ENCODE measurements at regions of chr6 and their contacts with region 1.

Region 1: GRCh38 chr6:3251462-3252314 is 7.1 kb upstream of the PSMG4 start:
- DNase-seq: peak; percentile 74 to 91 (median 84)
- H3K4me3 ChIP-seq: peak overlapping the region in 35 of 59 donors; percentile 0 to 57 (median 23)
- H3K27ac ChIP-seq: peak overlapping the region in 33 of 59 donors; percentile 4 to 77 (median 36)
- H3K27me3 ChIP-seq: no peaks in the 10 kb centered on the region
- CTCF ChIP-seq: peak; percentile 91 to 99 (median 98)

Region 2: DNA sequence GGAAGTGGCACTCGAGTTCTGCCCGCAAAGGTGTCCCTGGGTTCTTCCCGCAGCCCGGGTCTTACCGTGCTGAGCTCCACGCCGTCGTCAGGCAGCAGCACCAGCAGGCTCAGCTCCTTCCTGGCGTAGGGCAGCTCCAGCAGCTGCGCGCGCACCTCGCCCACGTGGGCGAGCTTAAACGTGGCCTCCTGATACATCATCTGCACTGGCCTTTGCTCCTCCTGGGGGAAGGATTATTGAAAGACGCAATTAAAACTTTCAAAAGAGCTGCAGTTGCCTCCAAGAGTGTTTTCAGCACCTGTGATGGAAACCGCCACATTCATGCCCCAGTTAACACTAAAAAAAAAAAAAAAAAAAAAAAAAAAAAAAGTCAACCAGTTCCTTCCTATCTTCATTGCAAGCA is 359.9 kb before region 1 on chr6:
- intact Hi-C with region 1: no loop called
- DNase-seq: peak in 1 of 10 donors; percentile 42
- H3K4me3 ChIP-seq: peak overlapping the region in 1 of 59 donors; percentile 14
- H3K27ac ChIP-seq: peak overlapping the region in 1 of 59 donors; percentile 17
- H3K27me3 ChIP-seq: no peaks in the 10 kb centered on the region
- CTCF ChIP-seq: no peak

Region 3: GRCh38 chr6:3068329-3069214 is 183.1 kb before region 1 on chr6 and contains the start of gene RIPK1:
- intact Hi-C with region 1: loop called (anchors 5 kb)
- DNase-seq: peak; percentile 85 to 96 (median 92)
- H3K4me3 ChIP-seq: peak within 1 kb of the TSS; percentile 68 to 98 (median 89)
- H3K27ac ChIP-seq: peak within 1 kb of the TSS; percentile 94 to 100 (median 99)
- H3K27me3 ChIP-seq: no peaks in the 10 kb centered on the region
- CTCF ChIP-seq: peak in 55 of 56 donors; percentile 34 to 80 (median 64)
- total RNA-seq, gene RIPK1: 6.5 to 17.9 (median 11.1) TPM

Region 4: DNA sequence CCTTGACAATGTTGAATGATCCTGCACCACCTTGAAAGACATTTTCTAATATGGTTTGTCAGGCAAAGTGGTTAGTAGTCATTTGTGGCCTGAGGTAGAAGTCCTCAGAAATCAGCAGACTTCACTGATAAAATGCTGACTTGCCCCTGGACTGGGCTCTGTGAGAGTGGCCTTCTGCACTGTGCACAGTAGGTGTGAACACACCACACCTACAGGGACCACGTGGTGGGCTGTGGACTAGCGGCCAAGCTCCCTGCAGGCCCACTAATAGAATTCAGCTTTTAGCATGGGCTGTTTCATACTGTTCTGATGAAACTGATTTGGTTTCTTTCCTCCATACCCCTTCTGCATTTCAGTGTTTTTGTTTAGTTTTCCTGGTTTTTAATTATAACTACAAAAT is 125.9 kb before region 1 on chr6:
- intact Hi-C with region 1: loop called (anchors 1 to 5 kb)
- DNase-seq: no peak
- H3K4me3 ChIP-seq: peak overlapping the region in 1 of 59 donors; percentile 12
- H3K27ac ChIP-seq: peak overlapping the region in 2 of 59 donors; percentile 27 to 28
- H3K27me3 ChIP-seq: no peaks in the 10 kb centered on the region
- CTCF ChIP-seq: no peak

Region 5: DNA sequence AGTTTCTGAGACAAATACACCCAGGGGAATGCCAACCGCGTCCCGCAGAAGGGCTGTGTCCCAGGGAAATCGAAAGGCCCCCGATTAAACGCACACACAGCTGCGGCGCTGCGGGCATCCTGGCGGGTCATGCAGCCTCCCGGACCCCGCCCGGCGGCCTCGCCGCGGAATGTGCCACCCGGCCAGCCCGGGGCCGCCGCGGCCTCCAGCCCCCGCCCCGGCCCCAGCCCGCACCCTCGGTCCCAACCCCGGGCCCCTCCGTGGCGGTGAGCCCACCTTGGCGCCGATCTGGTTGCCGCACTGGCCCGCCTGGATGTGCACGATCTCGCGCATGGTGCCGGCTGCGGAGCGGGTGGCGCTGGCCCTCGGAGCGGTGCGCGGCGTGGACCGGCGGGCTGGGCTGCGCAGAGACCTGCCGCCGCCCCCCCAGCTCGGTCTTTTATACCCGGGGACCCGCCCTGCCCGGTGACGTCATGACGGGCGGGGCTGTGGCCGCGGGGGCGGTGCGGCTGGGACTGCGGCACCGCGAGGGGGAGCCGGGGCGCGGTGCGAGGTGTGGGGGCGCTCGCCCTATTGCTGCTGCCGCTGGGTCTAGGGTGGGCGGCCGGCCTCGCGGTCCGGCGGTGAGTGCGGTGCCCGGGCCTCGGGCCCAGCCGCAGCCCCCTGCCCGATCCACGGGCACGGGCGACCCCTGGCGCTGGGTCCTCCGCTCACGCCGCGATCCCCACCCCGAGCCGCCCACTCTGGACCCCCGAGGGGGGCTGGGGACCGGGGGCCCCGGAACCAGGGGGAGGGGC is 94.4 kb before region 1 on chr6 and contains the start of gene TUBB2A:
- intact Hi-C with region 1: loop called (anchors 2 to 5 kb)
- DNase-seq: peak; percentile 61 to 93 (median 83)
- H3K4me3 ChIP-seq: peak within 1 kb of the TSS; percentile 52 to 99 (median 84)
- H3K27ac ChIP-seq: peak within 1 kb of the TSS; percentile 52 to 99 (median 96)
- H3K27me3 ChIP-seq: no peaks in the 10 kb centered on the region
- CTCF ChIP-seq: peak in 54 of 56 donors; percentile 21 to 81 (median 60)
- total RNA-seq, gene TUBB2A: 207 to 859 (median 516) TPM

Region 6: DNA sequence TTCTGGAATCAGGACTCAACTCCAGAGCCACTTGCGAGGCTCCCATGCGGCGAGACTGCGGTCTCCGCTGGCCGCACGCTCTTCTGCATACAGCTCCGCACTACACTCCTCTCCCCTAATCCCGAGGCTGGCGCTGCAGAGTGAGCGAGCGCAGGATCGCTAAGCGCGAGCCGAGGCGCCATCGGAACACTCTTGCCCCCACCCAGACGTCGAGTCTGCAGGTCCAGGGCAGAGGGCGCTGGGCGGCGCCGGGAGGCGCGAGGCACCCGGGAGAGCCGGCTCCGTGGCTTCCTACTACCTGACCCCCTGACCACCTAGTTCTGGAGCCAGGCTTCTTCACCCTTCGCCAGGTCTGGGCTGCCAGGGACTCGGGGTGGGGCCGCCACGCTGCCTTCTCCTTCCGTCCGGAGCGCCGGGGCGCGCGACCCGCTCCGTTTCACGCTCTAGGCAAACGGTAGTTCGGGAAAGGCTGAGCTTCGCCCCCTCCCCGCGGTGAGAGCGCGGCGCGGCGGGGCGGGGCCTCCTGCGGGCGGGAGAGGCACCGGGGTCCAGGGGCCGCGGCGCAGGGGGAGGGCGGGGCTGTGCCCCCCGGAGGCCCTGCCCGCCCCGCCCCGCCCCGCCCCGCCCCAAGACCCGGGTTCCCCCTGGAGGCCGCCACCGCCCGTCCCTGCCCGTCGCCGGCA is 89.0 kb before region 1 on chr6:
- intact Hi-C with region 1: loop called (anchors 2 to 5 kb)
- DNase-seq: peak in 9 of 10 donors; percentile 40 to 80 (median 64)
- H3K4me3 ChIP-seq: peak overlapping the region; percentile 54 to 83 (median 74)
- H3K27ac ChIP-seq: peak overlapping the region in 58 of 59 donors; percentile 21 to 96 (median 85)
- H3K27me3 ChIP-seq: no peaks in the 10 kb centered on the region
- CTCF ChIP-seq: peak in 25 of 56 donors; percentile 6 to 34 (median 17)

Region 7: GRCh38 chr6:3209114-3210023 is 42.3 kb before region 1 on chr6:
- intact Hi-C with region 1: loop called in 1 of 2 experiments (anchors 5 kb)
- DNase-seq: peak in 4 of 10 donors; percentile 54 to 58 (median 56)
- H3K4me3 ChIP-seq: peak overlapping the region in 1 of 59 donors; percentile 17
- H3K27ac ChIP-seq: peak overlapping the region in 3 of 59 donors; percentile 6 to 34 (median 16)
- H3K27me3 ChIP-seq: no peaks in the 10 kb centered on the region
- CTCF ChIP-seq: no peak

Region 8: GRCh38 chr6:3231247-3232016 is 20.3 kb before region 1 on chr6:
- intact Hi-C with region 1: loop called in 1 of 2 experiments (anchors 2 kb)
- DNase-seq: peak; percentile 52 to 91 (median 83)
- H3K4me3 ChIP-seq: peak overlapping the region; percentile 53 to 94 (median 72)
- H3K27ac ChIP-seq: peak overlapping the region; percentile 71 to 99 (median 95)
- H3K27me3 ChIP-seq: peaks cover 0 to 75% (median 23%) of the 10 kb centered on the region in 45 donors
- CTCF ChIP-seq: peak in 5 of 56 donors; percentile 7 to 13 (median 9)